Common myeloid progenitor, CD34-positive (primary cell): ENCODE measurements at regions of chr12 and their contacts with region 1.

Region 1: GRCh38 chr12:10140001-10140400 is 10.0 kb upstream of the CLEC7A start:
- DNase-seq: peak; percentile 84 to 94 (median 90)
- H3K4me3 ChIP-seq: no peak overlapping the region
- H3K27ac ChIP-seq: no peak overlapping the region
- H3K4me1 ChIP-seq: peaks cover 0 to 9% (median 1%) of the 10 kb centered on the region in 4 experiments
- H3K27me3 ChIP-seq: no peaks in the 10 kb centered on the region

Region 2: DNA sequence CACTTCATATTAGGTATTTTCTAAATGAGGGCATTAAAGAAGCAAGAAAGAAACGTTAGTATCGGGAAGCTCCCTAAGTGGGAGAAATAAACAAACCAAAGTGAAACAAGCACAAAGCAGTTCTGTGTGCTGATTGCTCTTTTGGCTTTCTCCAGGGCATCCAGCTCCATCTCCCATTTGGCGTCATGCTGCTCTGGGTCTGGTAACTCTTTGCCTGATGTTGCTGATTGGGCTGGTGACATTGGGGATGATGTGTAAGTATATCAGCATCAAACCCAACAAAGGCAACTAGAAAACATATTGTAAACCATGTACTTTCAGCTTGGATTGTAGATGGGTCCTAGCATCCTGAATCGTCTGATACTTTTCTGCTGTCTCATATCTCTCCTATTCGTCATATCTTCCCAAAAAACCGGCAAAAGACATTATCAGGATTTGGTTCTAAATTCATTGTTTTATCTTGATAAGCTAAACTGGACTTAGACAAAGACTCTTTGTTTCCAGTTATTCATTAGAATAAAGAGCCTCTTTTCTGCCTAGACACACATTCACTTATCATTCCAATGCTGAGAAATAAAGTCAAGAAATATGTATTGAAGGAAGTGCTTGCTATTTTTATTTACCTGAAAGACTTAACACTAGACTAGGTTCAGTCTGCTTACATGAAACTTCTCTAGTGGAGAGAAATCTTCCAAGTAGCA is 127.2 kb before region 1 on chr12:
- CTCF ChIA-PET with region 1: interaction called, 29 read pairs
- POLR2A ChIA-PET with region 1: no interaction called
- DNase-seq: no peak
- H3K4me3 ChIP-seq: no peak overlapping the region
- H3K27ac ChIP-seq: no peak overlapping the region
- H3K4me1 ChIP-seq: peaks cover 0 to 15% (median 8%) of the 10 kb centered on the region in 4 experiments
- H3K27me3 ChIP-seq: no peaks in the 10 kb centered on the region

Region 3: GRCh38 chr12:10033783-10034545 is 106.0 kb before region 1 on chr12:
- CTCF ChIA-PET with region 1: interaction called, 145 read pairs
- POLR2A ChIA-PET with region 1: no interaction called
- DNase-seq: peak in 2 of 3 donors; percentile 52 to 54
- H3K4me3 ChIP-seq: no peak overlapping the region
- H3K27ac ChIP-seq: peak overlapping the region in 1 of 2 experiments; percentile 11
- H3K4me1 ChIP-seq: peaks cover 0 to 16% (median 1%) of the 10 kb centered on the region in 4 experiments
- H3K27me3 ChIP-seq: no peaks in the 10 kb centered on the region

Region 4: DNA sequence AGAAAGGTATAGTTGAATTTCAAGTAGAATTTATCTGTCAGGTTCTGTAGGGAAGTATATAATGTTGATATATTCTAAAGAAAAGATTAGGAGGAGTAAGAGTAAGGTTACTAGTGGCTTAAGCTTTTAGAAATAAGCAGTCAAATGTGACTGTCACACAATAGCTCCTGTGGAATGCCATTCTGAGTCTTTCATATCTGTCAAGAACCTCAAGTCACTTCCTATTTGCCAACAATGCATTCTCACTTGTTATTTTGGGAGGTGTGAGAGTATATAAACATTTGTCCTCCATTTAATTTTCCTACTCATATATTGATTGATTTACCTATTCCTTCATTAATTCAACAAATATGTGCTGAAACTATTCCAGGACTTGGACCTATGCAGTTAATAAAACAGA is 97.8 kb before region 1 on chr12:
- CTCF ChIA-PET with region 1: interaction called, 145 read pairs
- POLR2A ChIA-PET with region 1: no interaction called
- DNase-seq: peak in 1 of 3 donors; percentile 18
- H3K4me3 ChIP-seq: no peak overlapping the region
- H3K27ac ChIP-seq: no peak overlapping the region
- H3K4me1 ChIP-seq: peaks cover 0 to 4% (median 0%) of the 10 kb centered on the region in 4 experiments
- H3K27me3 ChIP-seq: no peaks in the 10 kb centered on the region

Region 5: DNA sequence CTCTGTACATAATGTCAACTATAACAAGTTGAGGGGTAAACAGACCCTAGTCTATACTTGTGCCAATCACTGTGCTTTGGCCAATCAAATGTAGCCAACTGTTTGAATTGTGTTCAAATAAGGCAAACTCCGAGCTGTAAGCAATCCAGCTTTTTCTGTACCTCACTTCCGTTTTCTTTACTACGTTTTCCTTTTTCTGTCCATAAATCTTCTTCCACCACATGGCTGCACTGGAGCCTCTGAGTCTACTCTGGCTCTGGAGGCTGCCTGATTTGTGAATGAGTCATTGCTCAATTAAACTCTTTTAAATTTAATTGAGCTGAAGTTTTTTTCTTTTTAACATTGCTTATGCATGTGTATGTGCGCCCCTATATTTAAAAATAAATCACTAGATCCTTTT is 70.9 kb before region 1 on chr12:
- CTCF ChIA-PET with region 1: interaction called, 15 read pairs
- POLR2A ChIA-PET with region 1: no interaction called
- DNase-seq: peak; percentile 81 to 96 (median 92)
- H3K4me3 ChIP-seq: peak overlapping the region in 3 of 7 experiments; percentile 8 to 53 (median 12)
- H3K27ac ChIP-seq: peak overlapping the region; percentile 91 to 96
- H3K4me1 ChIP-seq: peaks cover 24 to 54% (median 34%) of the 10 kb centered on the region in 4 experiments
- H3K27me3 ChIP-seq: no peaks in the 10 kb centered on the region

Region 6: GRCh38 chr12:10153271-10154144 is 13.5 kb after region 1 on chr12:
- CTCF ChIA-PET with region 1: interaction called, 11 read pairs
- POLR2A ChIA-PET with region 1: interaction called, 3 read pairs
- DNase-seq: peak; percentile 52 to 76 (median 74)
- H3K4me3 ChIP-seq: peak overlapping the region; percentile 53 to 92 (median 81)
- H3K27ac ChIP-seq: no peak overlapping the region
- H3K4me1 ChIP-seq: peaks cover 0 to 10% (median 8%) of the 10 kb centered on the region in 4 experiments
- H3K27me3 ChIP-seq: peaks cover 0 to 2% (median 0%) of the 10 kb centered on the region in 5 experiments

Region 7: GRCh38 chr12:10205251-10205807 is 65.3 kb after region 1 on chr12:
- CTCF ChIA-PET with region 1: no interaction called
- POLR2A ChIA-PET with region 1: no interaction called
- DNase-seq: no peak
- H3K4me3 ChIP-seq: no peak overlapping the region
- H3K27ac ChIP-seq: no peak overlapping the region
- H3K4me1 ChIP-seq: no peaks in the 10 kb centered on the region
- H3K27me3 ChIP-seq: no peaks in the 10 kb centered on the region